ENCODE measurements at regions of chr12 and their contacts with region 1.

Region 1: DNA sequence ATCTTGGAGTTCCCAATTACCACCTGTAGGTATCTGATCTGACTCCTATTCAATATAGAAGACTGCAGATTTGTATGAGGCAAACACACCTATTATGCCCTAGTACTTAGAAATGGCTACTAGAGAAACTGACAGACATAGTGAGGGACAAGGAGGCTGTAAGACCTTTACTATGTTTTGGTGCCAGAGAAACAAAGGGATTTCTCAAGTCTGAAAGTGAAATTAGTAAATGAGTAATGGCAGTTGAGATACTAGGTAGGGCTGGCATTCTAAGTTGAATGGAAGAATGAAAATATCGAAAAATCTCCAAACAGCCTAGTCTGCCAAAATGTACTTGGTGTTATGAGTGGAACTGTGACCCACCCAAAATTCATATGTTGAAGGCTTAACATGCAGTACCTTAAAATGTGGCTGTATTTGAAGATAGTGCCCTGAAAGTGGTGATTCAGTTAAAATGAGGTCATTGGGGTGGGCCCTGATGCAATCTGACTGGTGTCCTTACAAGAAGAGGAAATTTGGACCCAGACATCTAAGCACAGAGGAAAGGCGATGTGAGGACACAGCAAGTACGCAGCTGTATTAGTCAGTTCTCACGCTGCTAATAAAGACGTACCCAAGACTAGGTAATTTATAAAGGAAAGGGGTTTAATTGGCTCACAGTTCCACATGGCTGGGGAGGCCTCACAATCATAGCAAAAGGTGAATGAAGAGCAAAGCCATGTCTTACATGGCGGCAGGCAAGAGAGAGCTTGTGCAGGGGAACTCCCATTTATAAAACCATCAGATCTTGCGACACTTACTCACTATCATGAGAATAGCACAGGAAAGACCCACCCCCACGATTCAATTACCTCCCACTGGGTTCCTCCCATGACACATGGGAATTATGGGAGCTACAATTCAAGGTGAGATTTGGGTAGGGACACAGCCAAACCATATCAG is 127.0 kb downstream of the APAF1 start:
- DNase-seq: no peak
- H3K4me3 Mint-ChIP-seq: no peak overlapping the region
- H3K27ac Mint-ChIP-seq: no peak overlapping the region
- H3K4me1 Mint-ChIP-seq: peaks cover 6% of the 10 kb centered on the region
- H3K27me3 Mint-ChIP-seq: no peaks in the 10 kb centered on the region

Region 2: GRCh38 chr12:98754095-98754494 is 18.0 kb before region 1 on chr12:
- CTCF ChIA-PET with region 1: no interaction called
- POLR2A ChIA-PET with region 1: no interaction called
- intact Hi-C with region 1: loop called (anchors 2 kb)
- DNase-seq: peak; percentile 79
- H3K4me3 Mint-ChIP-seq: peak overlapping the region; percentile 6
- H3K27ac Mint-ChIP-seq: peak overlapping the region; percentile 47
- H3K4me1 Mint-ChIP-seq: peaks cover 17% of the 10 kb centered on the region
- H3K27me3 Mint-ChIP-seq: peaks cover 2% of the 10 kb centered on the region

Region 3: GRCh38 chr12:98909749-98910148 is 137.7 kb after region 1 on chr12:
- CTCF ChIA-PET with region 1: no interaction called
- POLR2A ChIA-PET with region 1: no interaction called
- intact Hi-C with region 1: no loop called
- DNase-seq: no peak
- H3K4me3 Mint-ChIP-seq: no peak overlapping the region
- H3K27ac Mint-ChIP-seq: no peak overlapping the region
- H3K4me1 Mint-ChIP-seq: no peaks in the 10 kb centered on the region
- H3K27me3 Mint-ChIP-seq: peaks cover 2% of the 10 kb centered on the region

Measured in activated CD4-positive, alpha-beta memory T cell treated with anti-CD3 and anti-CD28 coated beads for 36 hours (primary cell).